ENCODE measurements at regions of chr19 and their contacts with region 1.

Region 1: DNA sequence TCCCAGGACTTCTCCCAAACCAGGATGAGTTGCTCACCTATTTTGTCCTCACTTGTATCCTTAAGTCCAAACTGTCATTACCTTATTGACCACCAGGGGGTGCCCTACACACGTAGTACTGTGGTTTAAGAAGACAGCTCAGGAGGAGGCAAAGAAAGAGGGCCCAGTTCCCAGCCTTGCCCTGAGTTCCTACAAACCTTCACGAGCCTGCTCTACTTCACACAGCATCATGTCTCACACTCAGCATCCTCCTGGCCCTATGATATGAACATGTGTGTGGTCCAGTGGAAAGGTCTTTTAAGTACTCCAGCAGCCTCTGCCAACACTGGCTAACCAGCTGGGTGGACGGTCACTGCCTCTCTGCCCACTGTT is 8.1 kb upstream of the ZNF784 start:
- DNase-seq: peak; percentile 93
- H3K4me3 ChIP-seq: no peak overlapping the region
- H3K4me3 Mint-ChIP-seq: peak overlapping the region; percentile 30
- H3K27ac Mint-ChIP-seq: peak overlapping the region; percentile 3
- H3K4me1 ChIP-seq: peaks cover 7% of the 10 kb centered on the region
- H3K4me1 Mint-ChIP-seq: peaks cover 30% of the 10 kb centered on the region
- H3K27me3 ChIP-seq: no peaks in the 10 kb centered on the region
- H3K27me3 Mint-ChIP-seq: no peaks in the 10 kb centered on the region
- CTCF ChIP-seq: peak; percentile 88

Region 2: GRCh38 chr19:55339048-55339888 is 293.2 kb before region 1 on chr19 and contains the start of gene KMT5C:
- CTCF ChIA-PET with region 1: no interaction called
- POLR2A ChIA-PET with region 1: interaction called, 12 read pairs
- intact Hi-C with region 1: no loop called
- DNase-seq: peak; percentile 100
- H3K4me3 ChIP-seq: peak within 1 kb of the TSS; percentile 67
- H3K4me3 Mint-ChIP-seq: peak within 1 kb of the TSS; percentile 91
- H3K27ac Mint-ChIP-seq: peak within 1 kb of the TSS; percentile 95
- H3K4me1 ChIP-seq: peaks cover 10% of the 10 kb centered on the region; the same call in 1 of the 2 replicates
- H3K4me1 Mint-ChIP-seq: peaks cover 14% of the 10 kb centered on the region
- H3K27me3 ChIP-seq: no peaks in the 10 kb centered on the region
- H3K27me3 Mint-ChIP-seq: no peaks in the 10 kb centered on the region
- CTCF ChIP-seq: peak in 1 of 2 experiments; percentile 43
- total RNA-seq, gene KMT5C: 25.8 and 26.3 TPM in 2 replicates

Region 3: DNA sequence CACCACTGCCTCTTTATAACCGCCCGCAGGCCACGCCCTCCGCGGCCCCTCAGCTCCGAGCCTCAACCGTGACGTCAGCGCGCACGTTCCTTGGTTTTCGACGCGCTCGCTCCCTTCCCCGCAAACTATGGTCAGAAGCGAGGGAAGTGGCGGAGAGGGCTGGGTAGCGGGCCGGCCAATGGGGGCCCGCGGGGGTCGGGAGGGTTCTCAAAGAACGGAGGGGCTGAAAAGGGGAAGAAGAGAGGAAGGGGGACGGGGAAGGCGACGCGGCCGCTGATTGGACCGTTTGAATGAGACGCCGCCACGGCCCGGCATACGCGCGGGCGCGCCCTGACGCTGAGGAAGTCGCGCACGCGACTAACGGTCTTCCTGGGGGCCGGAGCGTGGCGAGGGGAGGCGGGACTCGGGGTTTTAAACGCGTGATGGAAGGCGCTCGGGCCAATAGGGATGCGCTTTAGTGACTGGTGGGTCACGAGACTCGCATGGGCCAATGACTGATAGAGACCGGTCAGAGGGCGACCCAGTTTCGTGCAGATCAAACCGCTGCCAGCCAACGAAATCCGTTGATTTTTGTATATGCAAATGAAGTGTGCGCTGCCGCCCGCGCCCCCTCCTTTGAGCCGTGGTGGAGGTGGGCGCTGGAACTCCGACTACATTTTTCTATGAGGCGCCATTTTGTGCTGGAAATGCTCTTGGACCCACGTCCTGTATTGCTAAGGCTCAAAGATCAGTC is 224.5 kb before region 1 on chr19:
- CTCF ChIA-PET with region 1: no interaction called
- POLR2A ChIA-PET with region 1: interaction called, 16 read pairs
- intact Hi-C with region 1: no loop called
- DNase-seq: peak; percentile 99
- H3K4me3 ChIP-seq: peak overlapping the region; percentile 94
- H3K4me3 Mint-ChIP-seq: peak overlapping the region; percentile 93
- H3K27ac Mint-ChIP-seq: peak overlapping the region; percentile 99
- H3K4me1 ChIP-seq: peaks cover 18% of the 10 kb centered on the region
- H3K4me1 Mint-ChIP-seq: peaks cover 14% of the 10 kb centered on the region
- H3K27me3 ChIP-seq: no peaks in the 10 kb centered on the region
- H3K27me3 Mint-ChIP-seq: peaks cover 6% of the 10 kb centered on the region
- CTCF ChIP-seq: no peak

Region 4: GRCh38 chr19:55503502-55504251 is 128.8 kb before region 1 on chr19:
- CTCF ChIA-PET with region 1: interaction called, 10 read pairs
- POLR2A ChIA-PET with region 1: no interaction called
- intact Hi-C with region 1: loop called (anchors 5 kb)
- DNase-seq: peak; percentile 96 to 99
- H3K4me3 ChIP-seq: peak overlapping the region; percentile 53
- H3K4me3 Mint-ChIP-seq: peak overlapping the region; percentile 87
- H3K27ac Mint-ChIP-seq: peak overlapping the region; percentile 93
- H3K4me1 ChIP-seq: peaks cover 8% of the 10 kb centered on the region; the same call in 1 of the 2 replicates
- H3K4me1 Mint-ChIP-seq: peaks cover 18% of the 10 kb centered on the region
- H3K27me3 ChIP-seq: no peaks in the 10 kb centered on the region
- H3K27me3 Mint-ChIP-seq: peaks cover 8% of the 10 kb centered on the region
- CTCF ChIP-seq: peak; percentile 98 to 99

Region 5: DNA sequence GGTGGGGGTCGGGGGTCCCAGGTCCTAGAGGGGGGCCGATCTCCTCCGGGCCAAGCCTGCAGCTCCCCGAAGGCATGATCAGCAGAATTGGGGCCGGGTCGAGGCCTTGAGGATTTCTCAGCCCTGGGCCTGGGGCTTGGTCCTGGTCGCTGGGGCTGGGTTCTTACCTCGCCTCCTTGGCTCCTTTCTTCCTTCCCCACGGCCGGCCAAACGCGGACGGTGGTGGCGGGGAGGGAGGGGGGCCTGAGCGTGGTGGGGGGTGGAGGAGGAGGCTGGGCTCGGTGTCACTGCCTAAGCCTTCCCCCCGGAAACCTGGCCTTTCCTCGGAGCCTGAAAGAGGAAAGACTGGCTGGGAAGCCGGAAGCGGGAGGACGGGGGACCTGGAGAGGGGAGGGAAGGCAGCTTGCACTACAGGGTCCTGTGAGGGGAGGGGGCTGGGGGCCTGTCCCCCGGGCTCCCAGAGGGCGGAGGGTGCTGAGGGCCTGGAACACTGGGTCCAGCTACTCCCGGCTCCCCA is 51.8 kb before region 1 on chr19 and contains the start of gene ZNF579:
- CTCF ChIA-PET with region 1: interaction called, 8 read pairs
- POLR2A ChIA-PET with region 1: no interaction called
- intact Hi-C with region 1: loop called (anchors 2 kb)
- DNase-seq: peak; percentile 93
- H3K4me3 ChIP-seq: peak within 1 kb of the TSS; percentile 68
- H3K4me3 Mint-ChIP-seq: peak within 1 kb of the TSS; percentile 85
- H3K27ac Mint-ChIP-seq: peak within 1 kb of the TSS; percentile 46
- H3K4me1 ChIP-seq: peaks cover 19% of the 10 kb centered on the region
- H3K4me1 Mint-ChIP-seq: peaks cover 27% of the 10 kb centered on the region
- H3K27me3 ChIP-seq: no peaks in the 10 kb centered on the region
- H3K27me3 Mint-ChIP-seq: no peaks in the 10 kb centered on the region
- CTCF ChIP-seq: no peak
- total RNA-seq, gene ZNF579: 26.5 and 30.4 TPM in 2 replicates

Region 6: GRCh38 chr19:55643348-55644176 is 11.1 kb after region 1 on chr19 and contains the start of gene ZNF581:
- CTCF ChIA-PET with region 1: interaction called, 8 read pairs
- POLR2A ChIA-PET with region 1: interaction called, 7 read pairs
- intact Hi-C with region 1: loop called (anchors 1 kb)
- DNase-seq: peak; percentile 87 to 89
- H3K4me3 ChIP-seq: peak within 1 kb of the TSS; percentile 84
- H3K4me3 Mint-ChIP-seq: peak within 1 kb of the TSS; percentile 86
- H3K27ac Mint-ChIP-seq: peak within 1 kb of the TSS; percentile 95
- H3K4me1 ChIP-seq: peaks cover 10% of the 10 kb centered on the region; the same call in 1 of the 2 replicates
- H3K4me1 Mint-ChIP-seq: peaks cover 37% of the 10 kb centered on the region
- H3K27me3 ChIP-seq: no peaks in the 10 kb centered on the region
- H3K27me3 Mint-ChIP-seq: no peaks in the 10 kb centered on the region
- CTCF ChIP-seq: no peak
- total RNA-seq, gene ZNF581: 46.2 and 47.4 TPM in 2 replicates

Region 7: GRCh38 chr19:55809381-55810058 is 177.1 kb after region 1 on chr19:
- CTCF ChIA-PET with region 1: interaction called, 10 read pairs
- POLR2A ChIA-PET with region 1: no interaction called
- intact Hi-C with region 1: no loop called
- DNase-seq: peak; percentile 73 to 86
- H3K4me3 ChIP-seq: no peak overlapping the region
- H3K4me3 Mint-ChIP-seq: no peak overlapping the region
- H3K27ac Mint-ChIP-seq: no peak overlapping the region
- H3K4me1 ChIP-seq: 0 out of 2 replicates have a peak, but pooled peaks cover 4% of the 10 kb centered on the region
- H3K4me1 Mint-ChIP-seq: no peaks in the 10 kb centered on the region
- H3K27me3 ChIP-seq: no peaks in the 10 kb centered on the region
- H3K27me3 Mint-ChIP-seq: peaks cover 26% of the 10 kb centered on the region
- CTCF ChIP-seq: peak; percentile 40 to 67

Measured in Caco-2 (cell line).